CD8-positive, alpha-beta T cell (primary cell): ENCODE measurements at regions of chrX and their contacts with region 1.

Region 1: GRCh38 chrX:7996414-7996813 is 69.2 kb upstream of the PNPLA4 start:
- DNase-seq: peak in 6 of 9 experiments; percentile 2 to 59 (median 28)
- ATAC-seq: no peak
- H3K4me3 ChIP-seq: no peak overlapping the region
- H3K4me3 Mint-ChIP-seq: no peak overlapping the region
- H3K27ac ChIP-seq: no peak overlapping the region
- H3K27ac Mint-ChIP-seq: no peak overlapping the region
- H3K4me1 ChIP-seq: no peaks in the 10 kb centered on the region
- H3K4me1 Mint-ChIP-seq: no peaks in the 10 kb centered on the region
- H3K27me3 ChIP-seq: no peaks in the 10 kb centered on the region
- H3K27me3 Mint-ChIP-seq: no peaks in the 10 kb centered on the region
- CTCF ChIP-seq: peak; percentile 54

Region 2: GRCh38 chrX:8374041-8374825 is 377.8 kb after region 1 on chrX:
- CTCF ChIA-PET with region 1: no interaction called
- POLR2A ChIA-PET with region 1: no interaction called
- intact Hi-C with region 1: no loop called
- DNase-seq: no peak
- ATAC-seq: no peak
- H3K4me3 ChIP-seq: no peak overlapping the region
- H3K4me3 Mint-ChIP-seq: no peak overlapping the region
- H3K27ac ChIP-seq: no peak overlapping the region
- H3K27ac Mint-ChIP-seq: no peak overlapping the region
- H3K4me1 ChIP-seq: no peaks in the 10 kb centered on the region
- H3K4me1 Mint-ChIP-seq: no peaks in the 10 kb centered on the region
- H3K27me3 ChIP-seq: no peaks in the 10 kb centered on the region
- H3K27me3 Mint-ChIP-seq: no peaks in the 10 kb centered on the region
- CTCF ChIP-seq: no peak

Region 3: GRCh38 chrX:8743126-8743732 is 746.8 kb after region 1 on chrX:
- CTCF ChIA-PET with region 1: interaction called, 11 read pairs
- POLR2A ChIA-PET with region 1: no interaction called
- intact Hi-C with region 1: loop called in 1 of 2 experiments (anchors 1 kb)
- DNase-seq: peak; percentile 20 to 78 (median 59)
- ATAC-seq: peak; percentile 23
- H3K4me3 ChIP-seq: no peak overlapping the region
- H3K4me3 Mint-ChIP-seq: no peak overlapping the region
- H3K27ac ChIP-seq: no peak overlapping the region
- H3K27ac Mint-ChIP-seq: no peak overlapping the region
- H3K4me1 ChIP-seq: no peaks in the 10 kb centered on the region
- H3K4me1 Mint-ChIP-seq: no peaks in the 10 kb centered on the region
- H3K27me3 ChIP-seq: no peaks in the 10 kb centered on the region
- H3K27me3 Mint-ChIP-seq: peaks cover 9% of the 10 kb centered on the region
- CTCF ChIP-seq: peak; percentile 65

Region 4: DNA sequence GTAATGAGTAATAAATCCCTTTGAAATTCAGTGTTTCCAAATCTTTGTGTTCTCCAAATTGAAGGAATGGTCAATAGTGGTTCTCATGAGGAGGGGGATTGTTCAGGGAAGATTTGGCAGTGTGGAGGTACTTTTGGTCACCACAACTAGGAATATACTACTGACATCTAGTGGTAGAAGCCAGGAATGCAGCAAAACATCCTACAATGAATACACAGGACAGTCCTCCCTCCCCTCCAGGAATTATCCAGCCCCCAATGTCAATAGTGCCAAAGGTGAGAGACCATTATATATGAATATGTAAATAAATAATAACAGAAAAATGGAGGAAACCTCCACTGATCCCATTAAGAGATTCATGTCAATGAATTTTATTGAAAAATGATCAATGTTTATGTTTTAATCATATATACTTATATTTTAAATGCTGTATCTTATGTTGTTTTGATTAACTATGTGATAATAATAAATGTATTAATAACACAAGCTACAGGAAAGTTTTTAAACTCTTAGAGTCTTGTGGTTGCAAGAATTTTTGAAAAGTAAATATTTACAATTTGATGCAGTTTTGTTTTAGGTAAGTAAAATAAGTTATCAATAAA is 819.2 kb after region 1 on chrX:
- CTCF ChIA-PET with region 1: interaction called, 3 read pairs
- POLR2A ChIA-PET with region 1: no interaction called
- intact Hi-C with region 1: loop called (anchors 5 kb)
- DNase-seq: peak in 3 of 9 experiments; percentile 25 to 57 (median 48)
- ATAC-seq: peak; percentile 31
- H3K4me3 ChIP-seq: no peak overlapping the region
- H3K4me3 Mint-ChIP-seq: no peak overlapping the region
- H3K27ac ChIP-seq: no peak overlapping the region
- H3K27ac Mint-ChIP-seq: no peak overlapping the region
- H3K4me1 ChIP-seq: no peaks in the 10 kb centered on the region
- H3K4me1 Mint-ChIP-seq: no peaks in the 10 kb centered on the region
- H3K27me3 ChIP-seq: no peaks in the 10 kb centered on the region
- H3K27me3 Mint-ChIP-seq: peaks cover 3% of the 10 kb centered on the region
- CTCF ChIP-seq: peak; percentile 75